Activated naive CD4-positive, alpha-beta T cell treated with anti-CD3 and anti-CD28 coated beads, Interleukin-2, amount 10 ng/mL, durations not matched to agents 7 days and 5 days (primary cell): ENCODE measurements at regions of chr2 and their contacts with region 1.

Region 1: GRCh38 chr2:157327621-157328500 is 2.2 kb upstream of the ERMN start:
- DNase-seq: peak; percentile 92
- H3K4me3 Mint-ChIP-seq: peak overlapping the region; percentile 45
- H3K27ac Mint-ChIP-seq: peak overlapping the region; percentile 40
- H3K4me1 Mint-ChIP-seq: peaks cover 55% of the 10 kb centered on the region
- H3K27me3 Mint-ChIP-seq: no peaks in the 10 kb centered on the region

Region 2: DNA sequence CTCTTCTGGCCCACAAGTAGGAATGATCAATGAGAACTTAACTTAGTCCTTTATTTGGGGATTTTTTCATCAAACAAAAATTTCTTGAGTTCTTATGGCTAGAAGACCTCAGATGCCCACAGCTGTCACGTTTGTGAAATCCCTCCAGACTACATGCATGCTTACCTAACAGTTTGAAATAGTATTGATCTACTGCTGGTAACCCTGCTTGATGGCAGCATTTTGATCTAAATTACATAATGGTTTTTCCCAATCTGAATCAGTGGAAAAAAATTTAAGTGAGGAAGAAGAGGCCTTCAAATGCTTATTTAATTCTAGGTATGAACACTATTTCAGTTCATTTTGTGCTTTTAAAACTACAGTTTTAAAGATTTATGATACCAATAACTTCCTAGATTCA is 16.2 kb before region 1 on chr2:
- CTCF ChIA-PET with region 1: interaction called, 112 read pairs
- DNase-seq: no peak
- H3K4me3 Mint-ChIP-seq: no peak overlapping the region
- H3K27ac Mint-ChIP-seq: no peak overlapping the region
- H3K4me1 Mint-ChIP-seq: peaks cover 12% of the 10 kb centered on the region
- H3K27me3 Mint-ChIP-seq: no peaks in the 10 kb centered on the region

Region 3: GRCh38 chr2:157413326-157414035 is 85.6 kb after region 1 on chr2:
- CTCF ChIA-PET with region 1: interaction called, 45 read pairs
- DNase-seq: peak; percentile 73
- H3K4me3 Mint-ChIP-seq: peak overlapping the region; percentile 58
- H3K27ac Mint-ChIP-seq: peak overlapping the region; percentile 96
- H3K4me1 Mint-ChIP-seq: peaks cover 89% of the 10 kb centered on the region
- H3K27me3 Mint-ChIP-seq: peaks cover 4% of the 10 kb centered on the region

Region 4: GRCh38 chr2:157438863-157439823 is 111.3 kb after region 1 on chr2:
- CTCF ChIA-PET with region 1: interaction called, 14 read pairs
- DNase-seq: peak; percentile 43
- H3K4me3 Mint-ChIP-seq: peak overlapping the region; percentile 97
- H3K27ac Mint-ChIP-seq: peak overlapping the region; percentile 99
- H3K4me1 Mint-ChIP-seq: peaks cover 22% of the 10 kb centered on the region
- H3K27me3 Mint-ChIP-seq: no peaks in the 10 kb centered on the region

Region 5: GRCh38 chr2:157497638-157498314 is 169.9 kb after region 1 on chr2:
- CTCF ChIA-PET with region 1: interaction called, 41 read pairs
- DNase-seq: peak; percentile 28
- H3K4me3 Mint-ChIP-seq: no peak overlapping the region
- H3K27ac Mint-ChIP-seq: no peak overlapping the region
- H3K4me1 Mint-ChIP-seq: peaks cover 31% of the 10 kb centered on the region
- H3K27me3 Mint-ChIP-seq: no peaks in the 10 kb centered on the region

Region 6: GRCh38 chr2:157732548-157732963 is 404.7 kb after region 1 on chr2:
- CTCF ChIA-PET with region 1: no interaction called
- DNase-seq: no peak
- H3K4me3 Mint-ChIP-seq: no peak overlapping the region
- H3K27ac Mint-ChIP-seq: no peak overlapping the region
- H3K4me1 Mint-ChIP-seq: peaks cover 13% of the 10 kb centered on the region
- H3K27me3 Mint-ChIP-seq: no peaks in the 10 kb centered on the region